Cardiac septum (tissue), 1 donor: ENCODE measurements at regions of chr12 and their contacts with region 1.

Region 1: GRCh38 chr12:52506858-52507715 is 13.1 kb downstream of the KRT5 start:
- DNase-seq: peak; percentile 38

Region 2: GRCh38 chr12:52390739-52391617 is 116.1 kb before region 1 on chr12:
- intact Hi-C with region 1: loop called (anchors 5 kb)
- DNase-seq: peak; percentile 71